Caco-2 (cell line): ENCODE measurements at regions of chr6 and their contacts with region 1.

Region 1: GRCh38 chr6:66926065-66926464 is 1219.0 kb upstream of the EYS start:
- DNase-seq: peak in 1 of 2 experiments; percentile 18
- H3K4me3 ChIP-seq: no peak overlapping the region
- H3K4me3 Mint-ChIP-seq: no peak overlapping the region
- H3K27ac Mint-ChIP-seq: no peak overlapping the region
- H3K4me1 ChIP-seq: no peaks in the 10 kb centered on the region
- H3K4me1 Mint-ChIP-seq: no peaks in the 10 kb centered on the region
- H3K27me3 ChIP-seq: no peaks in the 10 kb centered on the region
- H3K27me3 Mint-ChIP-seq: no peaks in the 10 kb centered on the region
- CTCF ChIP-seq: peak in 1 of 2 experiments; percentile 13

Region 2: DNA sequence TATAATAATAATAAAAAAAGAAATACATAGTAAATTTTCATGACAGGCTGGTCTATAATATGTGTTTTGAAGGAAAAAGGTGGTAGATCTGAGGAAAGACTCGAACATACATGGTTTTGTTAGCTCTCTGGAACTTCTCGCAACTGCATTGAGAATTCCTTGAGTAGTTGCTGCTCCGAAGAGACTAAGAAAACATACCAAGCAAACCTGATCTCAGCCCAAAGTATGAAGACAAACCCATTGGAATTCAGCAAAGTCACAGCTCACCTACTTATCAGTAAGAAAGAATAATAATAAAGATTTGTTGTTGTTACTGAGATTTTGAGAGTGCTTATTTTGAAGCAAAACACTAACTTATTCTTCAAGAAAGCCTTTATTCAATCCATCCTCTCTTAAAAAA is 111.9 kb before region 1 on chr6:
- CTCF ChIA-PET with region 1: no interaction called
- POLR2A ChIA-PET with region 1: no interaction called
- intact Hi-C with region 1: no loop called
- DNase-seq: no peak
- H3K4me3 ChIP-seq: no peak overlapping the region
- H3K4me3 Mint-ChIP-seq: no peak overlapping the region
- H3K27ac Mint-ChIP-seq: no peak overlapping the region
- H3K4me1 ChIP-seq: no peaks in the 10 kb centered on the region
- H3K4me1 Mint-ChIP-seq: no peaks in the 10 kb centered on the region
- H3K27me3 ChIP-seq: no peaks in the 10 kb centered on the region
- H3K27me3 Mint-ChIP-seq: no peaks in the 10 kb centered on the region
- CTCF ChIP-seq: no peak

Region 3: GRCh38 chr6:67009818-67010217 is 83.8 kb after region 1 on chr6:
- CTCF ChIA-PET with region 1: no interaction called
- POLR2A ChIA-PET with region 1: no interaction called
- intact Hi-C with region 1: loop called (anchors 1 kb)
- DNase-seq: peak; percentile 38 to 43
- H3K4me3 ChIP-seq: no peak overlapping the region
- H3K4me3 Mint-ChIP-seq: no peak overlapping the region
- H3K27ac Mint-ChIP-seq: peak overlapping the region; percentile 33
- H3K4me1 ChIP-seq: no peaks in the 10 kb centered on the region; the same call in 1 of the 2 replicates
- H3K4me1 Mint-ChIP-seq: peaks cover 8% of the 10 kb centered on the region
- H3K27me3 ChIP-seq: no peaks in the 10 kb centered on the region
- H3K27me3 Mint-ChIP-seq: no peaks in the 10 kb centered on the region
- CTCF ChIP-seq: peak; percentile 33 to 36

Region 4: GRCh38 chr6:67933278-67933677 is 1007.2 kb after region 1 on chr6:
- CTCF ChIA-PET with region 1: no interaction called
- POLR2A ChIA-PET with region 1: no interaction called
- intact Hi-C with region 1: loop called (anchors 10 kb)
- DNase-seq: peak in 1 of 2 experiments; percentile 5
- H3K4me3 ChIP-seq: no peak overlapping the region
- H3K4me3 Mint-ChIP-seq: no peak overlapping the region
- H3K27ac Mint-ChIP-seq: no peak overlapping the region
- H3K4me1 ChIP-seq: no peaks in the 10 kb centered on the region
- H3K4me1 Mint-ChIP-seq: no peaks in the 10 kb centered on the region
- H3K27me3 ChIP-seq: no peaks in the 10 kb centered on the region
- H3K27me3 Mint-ChIP-seq: no peaks in the 10 kb centered on the region
- CTCF ChIP-seq: no peak